HEK293T (cell line): ENCODE measurements at regions of chrX and their contacts with region 1.

Region 1: GRCh38 chrX:43958529-43958928 is 14.7 kb downstream of the NDP start:
- DNase-seq: peak; percentile 66

Region 2: GRCh38 chrX:44244008-44244407 is 285.5 kb after region 1 on chrX:
- CTCF ChIA-PET with region 1: interaction called, 28 read pairs
- POLR2A ChIA-PET with region 1: no interaction called
- DNase-seq: peak; percentile 19